AG04450 (cell line): ENCODE measurements at regions of chr15 and their contacts with region 1.

Region 1: GRCh38 chr15:45118131-45118588 is 4.0 kb downstream of the DUOXA2 start:
- DNase-seq: peak; percentile 76
- H3K4me3 ChIP-seq: no peak overlapping the region; the same call in 1 of the 2 replicates
- H3K27ac ChIP-seq: no peak overlapping the region
- H3K27me3 ChIP-seq: peaks cover 46% of the 10 kb centered on the region
- CTCF ChIP-seq: peak; percentile 100

Region 2: DNA sequence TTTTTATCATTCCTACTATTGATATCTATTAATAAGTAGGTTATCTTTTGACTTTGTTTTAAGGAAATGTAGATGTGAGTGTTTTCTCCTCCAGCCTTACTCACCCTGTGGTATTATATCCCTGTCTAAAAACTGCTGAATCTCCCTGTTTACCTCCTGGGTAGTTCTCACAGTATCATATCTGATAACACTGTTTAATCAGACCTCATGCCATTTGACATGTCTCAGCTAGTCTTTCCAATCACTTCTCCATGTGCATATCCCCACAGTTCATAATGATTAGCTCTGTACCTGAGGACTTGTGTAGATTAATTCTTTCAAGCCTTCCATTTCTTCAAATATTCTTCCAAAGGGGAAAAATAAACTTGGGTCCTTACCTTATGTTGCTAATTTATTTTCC is 34.9 kb before region 1 on chr15:
- CTCF ChIA-PET with region 1: interaction called, 10 read pairs
- POLR2A ChIA-PET with region 1: no interaction called
- DNase-seq: no peak
- H3K4me3 ChIP-seq: no peak overlapping the region
- H3K27ac ChIP-seq: no peak overlapping the region
- H3K27me3 ChIP-seq: peaks cover 3% of the 10 kb centered on the region
- CTCF ChIP-seq: no peak

Region 3: DNA sequence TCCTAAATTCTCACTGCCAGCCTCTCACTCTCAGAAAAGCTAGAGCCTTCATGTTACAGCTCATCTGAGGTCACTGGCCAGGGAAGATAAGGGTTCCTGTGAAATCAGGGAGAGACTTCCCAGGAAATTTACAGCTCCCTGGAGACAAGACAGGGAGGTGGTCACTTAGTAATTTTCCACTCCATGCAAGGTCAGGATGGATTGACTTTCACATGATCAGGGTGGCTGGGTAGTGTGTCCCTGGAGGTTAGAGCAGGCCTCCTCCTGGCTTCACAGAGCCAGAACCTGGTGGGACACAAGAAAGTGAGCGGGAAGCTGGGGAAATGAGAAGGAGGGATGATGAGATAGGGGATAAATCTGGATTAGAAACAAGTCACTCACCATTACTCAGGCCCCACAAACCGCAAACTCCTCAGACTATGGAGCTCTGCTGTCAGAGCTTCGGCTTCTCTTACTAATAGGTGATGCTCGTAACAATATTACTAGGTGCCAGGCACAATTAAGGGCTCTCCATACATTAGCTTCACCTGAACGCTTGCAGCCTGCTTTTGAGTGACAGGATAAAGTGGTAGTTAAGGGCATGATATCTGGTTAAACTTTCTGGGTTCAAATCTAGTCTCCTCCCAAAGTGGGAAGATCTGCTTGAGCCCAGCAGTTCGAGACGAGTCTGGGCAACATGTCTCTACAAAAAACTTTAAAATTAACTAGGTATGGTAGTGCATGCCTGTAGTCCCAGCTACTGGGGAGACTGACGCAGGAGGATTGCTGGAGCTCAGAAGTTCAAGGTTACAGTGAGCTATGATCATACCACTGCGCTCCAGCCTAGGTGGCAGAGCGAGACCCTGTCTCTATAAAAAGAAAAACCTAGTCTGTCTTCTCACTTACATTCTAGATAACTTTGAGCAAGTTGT is 29.1 kb before region 1 on chr15:
- CTCF ChIA-PET with region 1: interaction called, 12 read pairs
- POLR2A ChIA-PET with region 1: no interaction called
- DNase-seq: no peak
- H3K4me3 ChIP-seq: no peak overlapping the region
- H3K27ac ChIP-seq: no peak overlapping the region
- H3K27me3 ChIP-seq: peaks cover 18% of the 10 kb centered on the region
- CTCF ChIP-seq: no peak

Region 4: GRCh38 chr15:45094358-45094730 is 23.8 kb before region 1 on chr15:
- CTCF ChIA-PET with region 1: interaction called, 12 read pairs
- POLR2A ChIA-PET with region 1: no interaction called
- DNase-seq: no peak
- H3K4me3 ChIP-seq: no peak overlapping the region
- H3K27ac ChIP-seq: no peak overlapping the region
- H3K27me3 ChIP-seq: peaks cover 30% of the 10 kb centered on the region
- CTCF ChIP-seq: no peak

Region 5: GRCh38 chr15:45100884-45101622 is 17.1 kb before region 1 on chr15:
- CTCF ChIA-PET with region 1: interaction called, 22 read pairs
- POLR2A ChIA-PET with region 1: no interaction called
- DNase-seq: no peak
- H3K4me3 ChIP-seq: no peak overlapping the region
- H3K27ac ChIP-seq: no peak overlapping the region
- H3K27me3 ChIP-seq: peaks cover 37% of the 10 kb centered on the region
- CTCF ChIP-seq: no peak

Region 6: GRCh38 chr15:45402162-45402954 is 284.2 kb after region 1 on chr15:
- CTCF ChIA-PET with region 1: interaction called, 10 read pairs
- POLR2A ChIA-PET with region 1: no interaction called
- DNase-seq: peak; percentile 98
- H3K4me3 ChIP-seq: peak overlapping the region; percentile 87
- H3K27ac ChIP-seq: peak overlapping the region; percentile 53
- H3K27me3 ChIP-seq: peaks cover 3% of the 10 kb centered on the region
- CTCF ChIP-seq: no peak

Region 7: DNA sequence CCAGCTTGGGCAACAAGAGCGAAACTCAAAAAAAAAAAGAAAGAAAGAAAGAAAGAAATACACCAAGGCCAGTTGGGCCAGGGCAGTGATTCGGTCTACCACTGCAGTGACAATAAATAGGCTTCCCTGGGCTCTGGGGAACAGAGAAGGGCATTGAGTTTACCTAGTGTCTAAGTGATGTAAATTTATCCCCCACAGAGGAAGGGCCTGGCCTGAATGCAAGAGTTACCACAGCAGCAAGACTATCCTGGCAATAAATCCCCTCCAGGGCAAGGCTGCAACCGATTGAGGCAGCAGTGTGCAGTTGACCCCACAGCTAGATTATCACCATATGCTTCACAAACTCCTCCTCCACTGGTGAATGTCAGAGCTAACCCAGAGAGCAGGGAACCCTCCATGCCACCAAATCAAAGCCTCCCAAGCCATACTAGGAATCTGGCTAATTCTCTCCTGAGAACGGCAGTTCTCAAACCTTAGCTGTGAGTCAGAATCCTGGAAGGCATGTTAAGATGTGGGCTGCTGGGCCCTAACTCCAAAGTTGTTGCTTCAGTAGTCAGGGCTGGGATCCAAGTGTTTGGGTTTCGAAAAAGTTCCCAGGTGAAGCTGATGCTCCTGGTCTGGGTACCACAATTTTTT is 324.5 kb after region 1 on chr15:
- CTCF ChIA-PET with region 1: no interaction called
- POLR2A ChIA-PET with region 1: no interaction called
- DNase-seq: no peak
- H3K4me3 ChIP-seq: no peak overlapping the region
- H3K27ac ChIP-seq: no peak overlapping the region
- H3K27me3 ChIP-seq: no peaks in the 10 kb centered on the region
- CTCF ChIP-seq: no peak

Region 8: DNA sequence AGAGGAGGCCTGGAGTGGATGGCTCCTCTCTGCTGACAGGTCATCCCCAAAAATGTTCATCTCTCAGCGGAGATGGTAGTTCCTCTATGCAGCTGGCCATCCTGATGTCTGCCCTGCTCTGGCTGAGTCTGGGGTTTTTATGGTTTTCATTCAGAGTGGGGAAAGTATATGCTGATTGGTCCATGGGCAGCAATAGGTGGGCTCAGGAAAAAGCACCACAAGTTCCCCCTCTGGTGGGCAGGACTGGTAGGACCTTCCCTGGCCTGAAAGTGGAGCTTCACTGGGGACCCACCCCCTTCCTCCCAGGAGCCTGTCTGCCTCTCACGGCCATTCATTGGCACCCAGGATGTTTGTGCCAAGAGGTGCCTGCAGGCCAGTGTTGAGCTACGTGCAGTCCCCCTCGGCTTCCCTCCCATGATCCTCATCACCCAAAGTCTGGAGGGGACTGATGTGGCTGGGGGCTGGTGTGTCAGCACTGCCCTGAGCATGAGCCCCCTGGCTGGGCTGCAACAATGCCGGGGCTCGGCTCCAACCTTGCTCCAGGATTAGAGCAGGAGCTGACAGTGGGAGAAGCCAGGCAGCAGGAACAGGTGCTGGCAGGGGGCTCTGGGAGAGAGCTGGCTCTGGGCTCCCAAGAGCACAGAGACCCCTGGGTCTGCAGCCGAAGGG is 455.9 kb after region 1 on chr15:
- CTCF ChIA-PET with region 1: no interaction called
- POLR2A ChIA-PET with region 1: no interaction called
- DNase-seq: no peak
- H3K4me3 ChIP-seq: no peak overlapping the region
- H3K27ac ChIP-seq: no peak overlapping the region
- H3K27me3 ChIP-seq: peaks cover 6% of the 10 kb centered on the region
- CTCF ChIP-seq: peak; percentile 32